HEK293T (cell line): ENCODE measurements at regions of chr4 and their contacts with region 1.

Region 1: GRCh38 chr4:153083447-153083947 is 120.7 kb upstream of the TRIM2 start:
- DNase-seq: peak; percentile 81

Region 2: GRCh38 chr4:152848508-152848907 is 235.0 kb before region 1 on chr4:
- CTCF ChIA-PET with region 1: interaction called, 17 read pairs
- POLR2A ChIA-PET with region 1: no interaction called
- DNase-seq: no peak

Region 3: DNA sequence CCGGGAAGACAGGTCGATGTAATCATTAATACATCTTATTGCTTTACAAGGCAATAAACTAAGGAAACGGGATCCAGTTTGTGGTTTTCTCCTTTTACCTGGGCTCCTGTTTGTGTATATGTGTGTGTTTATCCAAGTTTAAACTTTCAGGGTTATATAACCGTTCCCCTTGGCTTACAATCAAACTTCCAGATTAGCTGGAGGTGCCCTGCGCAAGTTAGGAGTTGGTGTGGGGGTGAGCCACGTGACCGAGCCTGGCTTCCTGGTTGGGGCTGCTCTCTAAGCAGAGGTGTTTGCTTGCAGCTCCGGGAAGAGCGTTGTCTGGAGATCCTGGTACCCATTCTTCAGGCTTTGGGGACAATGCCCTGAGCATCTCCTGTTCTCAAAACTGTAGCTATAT is 18.2 kb before region 1 on chr4:
- CTCF ChIA-PET with region 1: no interaction called
- POLR2A ChIA-PET with region 1: no interaction called
- DNase-seq: no peak

Region 4: GRCh38 chr4:153127760-153128494 is 44.4 kb after region 1 on chr4:
- CTCF ChIA-PET with region 1: interaction called, 48 read pairs
- POLR2A ChIA-PET with region 1: interaction called, 3 read pairs
- DNase-seq: peak; percentile 78